ENCODE measurements at regions of chr12 and their contacts with region 1.

Region 1: DNA sequence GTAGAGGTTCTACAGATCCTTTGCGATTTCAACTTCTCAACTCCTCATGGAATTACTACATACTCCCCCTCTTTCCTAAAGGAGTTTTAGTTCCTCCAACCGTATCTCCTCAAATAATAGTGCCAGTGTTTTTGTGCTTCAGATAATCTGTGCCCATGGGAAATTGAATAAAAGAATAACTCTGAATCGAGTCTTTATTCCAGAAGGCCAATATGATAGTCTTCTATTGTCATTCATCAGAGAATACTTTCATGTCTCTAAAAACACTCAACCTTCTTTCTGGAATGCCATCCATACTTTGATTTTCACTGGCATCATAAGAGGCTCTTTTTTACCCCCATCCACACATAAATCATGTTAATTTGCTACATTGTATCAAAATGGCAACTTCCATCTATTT is 911.3 kb upstream of the USP15 start:
- DNase-seq: no peak
- H3K4me3 ChIP-seq: no peak overlapping the region
- CTCF ChIP-seq: no peak
- POLR2A ChIP-seq: no peak

Region 2: GRCh38 chr12:60394665-60395064 is 954.2 kb before region 1 on chr12:
- intact Hi-C with region 1: loop called (anchors 5 kb)
- DNase-seq: no peak
- H3K4me3 ChIP-seq: no peak overlapping the region
- CTCF ChIP-seq: no peak
- POLR2A ChIP-seq: no peak

Region 3: GRCh38 chr12:61098031-61098580 is 250.8 kb before region 1 on chr12:
- intact Hi-C with region 1: no loop called
- DNase-seq: no peak
- H3K4me3 ChIP-seq: no peak overlapping the region
- CTCF ChIP-seq: no peak
- POLR2A ChIP-seq: no peak

Region 4: DNA sequence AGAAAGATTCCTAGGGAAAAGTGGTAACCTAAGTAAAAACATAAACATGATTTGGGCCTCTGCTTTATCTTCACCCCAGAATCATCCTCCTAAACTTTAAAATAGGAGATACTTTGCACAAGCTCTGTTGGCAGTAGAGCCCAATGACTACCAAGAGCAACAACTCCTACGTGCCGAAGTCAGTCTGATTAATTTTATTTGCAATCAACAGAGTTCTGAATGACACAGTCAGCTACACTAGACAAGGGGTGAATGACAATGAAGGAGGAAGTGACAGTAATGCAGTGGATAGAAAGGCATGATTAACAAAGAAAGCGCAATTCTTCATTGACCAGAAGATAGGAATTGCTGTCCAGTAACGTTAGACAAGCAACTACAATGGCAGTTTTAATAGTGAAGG is 46.6 kb before region 1 on chr12:
- intact Hi-C with region 1: no loop called
- DNase-seq: no peak
- H3K4me3 ChIP-seq: no peak overlapping the region
- CTCF ChIP-seq: no peak
- POLR2A ChIP-seq: no peak

Measured in lower leg skin (tissue), 4 donors.